CD4-positive, alpha-beta memory T cell (primary cell): ENCODE measurements at regions of chr19 and their contacts with region 1.

Region 1: GRCh38 chr19:1131738-1132551 is 28.2 kb downstream of the GPX4 start:
- DNase-seq: peak; percentile 82 to 92 (median 83)
- H3K4me3 ChIP-seq: peak overlapping the region; percentile 61 to 89
- H3K4me3 Mint-ChIP-seq: peak overlapping the region; percentile 85 to 92 (median 88)
- H3K27ac ChIP-seq: peak overlapping the region; percentile 90
- H3K27ac Mint-ChIP-seq: peak overlapping the region; percentile 91 to 94 (median 94)
- H3K4me1 ChIP-seq: peaks cover 60% of the 10 kb centered on the region
- H3K4me1 Mint-ChIP-seq: peaks cover 7 to 35% (median 23%) of the 10 kb centered on the region in 4 donors
- H3K27me3 ChIP-seq: no peaks in the 10 kb centered on the region
- H3K27me3 Mint-ChIP-seq: no peaks in the 10 kb centered on the region

Region 2: GRCh38 chr19:1087813-1088415 is 44.0 kb before region 1 on chr19:
- CTCF ChIA-PET with region 1: no interaction called
- POLR2A ChIA-PET with region 1: interaction called, 15 read pairs
- intact Hi-C with region 1: no loop called
- DNase-seq: peak; percentile 59 to 78 (median 65)
- H3K4me3 ChIP-seq: no peak overlapping the region
- H3K4me3 Mint-ChIP-seq: peak overlapping the region in 5 of 8 donors; percentile 25 to 82 (median 69)
- H3K27ac ChIP-seq: peak overlapping the region; percentile 74
- H3K27ac Mint-ChIP-seq: peak overlapping the region; percentile 72 to 97 (median 93)
- H3K4me1 ChIP-seq: peaks cover 64% of the 10 kb centered on the region
- H3K4me1 Mint-ChIP-seq: peaks cover 14 to 67% (median 32%) of the 10 kb centered on the region in 4 donors
- H3K27me3 ChIP-seq: no peaks in the 10 kb centered on the region
- H3K27me3 Mint-ChIP-seq: no peaks in the 10 kb centered on the region

Region 3: DNA sequence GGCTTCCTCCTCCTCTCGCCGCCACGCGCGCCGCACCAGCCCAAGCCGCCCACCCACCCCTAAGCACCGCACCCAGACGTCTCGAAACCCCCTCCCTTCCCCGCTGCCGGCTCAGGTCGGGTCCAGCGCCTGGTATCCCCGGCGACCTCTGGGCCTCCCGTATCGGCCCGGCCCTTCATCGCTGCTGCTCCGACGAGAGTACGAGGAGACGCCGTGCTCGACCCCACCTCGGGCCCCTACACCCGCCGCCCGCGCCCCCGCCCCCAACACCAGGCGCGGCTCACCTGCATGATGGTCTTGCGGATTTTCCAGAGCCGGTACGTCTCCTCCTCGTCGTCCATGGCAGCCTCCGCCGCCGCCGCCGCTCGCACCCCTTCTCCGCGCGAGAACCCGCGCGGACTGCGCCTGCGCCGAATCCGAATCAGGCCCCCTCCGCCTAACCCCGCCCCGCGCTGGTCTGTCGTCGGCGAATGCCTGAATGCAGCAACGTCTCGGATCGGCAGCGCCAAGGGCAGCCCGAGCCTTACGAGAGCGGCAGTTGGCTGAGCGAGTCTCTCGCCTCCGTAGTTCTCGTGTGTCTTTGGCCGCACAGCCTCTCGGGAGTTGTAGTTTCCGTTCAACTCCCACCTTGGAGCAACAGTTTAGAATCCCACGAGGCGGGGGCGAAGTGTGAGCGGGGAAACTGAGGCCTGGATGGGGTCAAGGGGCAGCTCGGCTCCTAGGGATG is 36.8 kb before region 1 on chr19 and contains the start of gene POLR2E:
- CTCF ChIA-PET with region 1: no interaction called
- POLR2A ChIA-PET with region 1: interaction called, 8 read pairs
- intact Hi-C with region 1: loop called (anchors 5 kb)
- DNase-seq: peak; percentile 97 to 99 (median 98)
- H3K4me3 ChIP-seq: peak within 1 kb of the TSS; percentile 54 to 65
- H3K4me3 Mint-ChIP-seq: peak within 1 kb of the TSS; percentile 83 to 96 (median 90)
- H3K27ac ChIP-seq: peak within 1 kb of the TSS; percentile 85
- H3K27ac Mint-ChIP-seq: peak within 1 kb of the TSS; percentile 87 to 97 (median 93)
- H3K4me1 ChIP-seq: peaks cover 44% of the 10 kb centered on the region
- H3K4me1 Mint-ChIP-seq: peaks cover 22 to 75% (median 46%) of the 10 kb centered on the region in 4 donors
- H3K27me3 ChIP-seq: no peaks in the 10 kb centered on the region
- H3K27me3 Mint-ChIP-seq: no peaks in the 10 kb centered on the region
- total RNA-seq, gene POLR2E: 76.0 to 80.0 TPM

Region 4: GRCh38 chr19:1103708-1104310 is 28.1 kb before region 1 on chr19 and contains the start of gene GPX4:
- CTCF ChIA-PET with region 1: no interaction called
- POLR2A ChIA-PET with region 1: interaction called, 42 read pairs
- intact Hi-C with region 1: loop called (anchors 5 kb)
- DNase-seq: peak; percentile 94 to 98 (median 97)
- H3K4me3 ChIP-seq: peak within 1 kb of the TSS; percentile 47 to 76
- H3K4me3 Mint-ChIP-seq: peak within 1 kb of the TSS; percentile 73 to 86 (median 77)
- H3K27ac ChIP-seq: peak within 1 kb of the TSS; percentile 96
- H3K27ac Mint-ChIP-seq: peak within 1 kb of the TSS; percentile 92 to 97 (median 96)
- H3K4me1 ChIP-seq: peaks cover 43% of the 10 kb centered on the region
- H3K4me1 Mint-ChIP-seq: peaks cover 14 to 51% (median 33%) of the 10 kb centered on the region in 4 donors
- H3K27me3 ChIP-seq: no peaks in the 10 kb centered on the region
- H3K27me3 Mint-ChIP-seq: no peaks in the 10 kb centered on the region
- total RNA-seq, gene GPX4: 210 to 220 TPM

Region 5: GRCh38 chr19:1113033-1113985 is 18.6 kb before region 1 on chr19:
- CTCF ChIA-PET with region 1: interaction called, 5 read pairs
- POLR2A ChIA-PET with region 1: interaction called, 8 read pairs
- intact Hi-C with region 1: loop called (anchors 1 kb)
- DNase-seq: peak; percentile 75 to 83 (median 77)
- H3K4me3 ChIP-seq: no peak overlapping the region
- H3K4me3 Mint-ChIP-seq: no peak overlapping the region
- H3K27ac ChIP-seq: peak overlapping the region; percentile 35
- H3K27ac Mint-ChIP-seq: peak overlapping the region in 4 of 7 donors; percentile 24 to 53 (median 42)
- H3K4me1 ChIP-seq: peaks cover 6% of the 10 kb centered on the region
- H3K4me1 Mint-ChIP-seq: no peaks in the 10 kb centered on the region
- H3K27me3 ChIP-seq: no peaks in the 10 kb centered on the region
- H3K27me3 Mint-ChIP-seq: no peaks in the 10 kb centered on the region

Region 6: DNA sequence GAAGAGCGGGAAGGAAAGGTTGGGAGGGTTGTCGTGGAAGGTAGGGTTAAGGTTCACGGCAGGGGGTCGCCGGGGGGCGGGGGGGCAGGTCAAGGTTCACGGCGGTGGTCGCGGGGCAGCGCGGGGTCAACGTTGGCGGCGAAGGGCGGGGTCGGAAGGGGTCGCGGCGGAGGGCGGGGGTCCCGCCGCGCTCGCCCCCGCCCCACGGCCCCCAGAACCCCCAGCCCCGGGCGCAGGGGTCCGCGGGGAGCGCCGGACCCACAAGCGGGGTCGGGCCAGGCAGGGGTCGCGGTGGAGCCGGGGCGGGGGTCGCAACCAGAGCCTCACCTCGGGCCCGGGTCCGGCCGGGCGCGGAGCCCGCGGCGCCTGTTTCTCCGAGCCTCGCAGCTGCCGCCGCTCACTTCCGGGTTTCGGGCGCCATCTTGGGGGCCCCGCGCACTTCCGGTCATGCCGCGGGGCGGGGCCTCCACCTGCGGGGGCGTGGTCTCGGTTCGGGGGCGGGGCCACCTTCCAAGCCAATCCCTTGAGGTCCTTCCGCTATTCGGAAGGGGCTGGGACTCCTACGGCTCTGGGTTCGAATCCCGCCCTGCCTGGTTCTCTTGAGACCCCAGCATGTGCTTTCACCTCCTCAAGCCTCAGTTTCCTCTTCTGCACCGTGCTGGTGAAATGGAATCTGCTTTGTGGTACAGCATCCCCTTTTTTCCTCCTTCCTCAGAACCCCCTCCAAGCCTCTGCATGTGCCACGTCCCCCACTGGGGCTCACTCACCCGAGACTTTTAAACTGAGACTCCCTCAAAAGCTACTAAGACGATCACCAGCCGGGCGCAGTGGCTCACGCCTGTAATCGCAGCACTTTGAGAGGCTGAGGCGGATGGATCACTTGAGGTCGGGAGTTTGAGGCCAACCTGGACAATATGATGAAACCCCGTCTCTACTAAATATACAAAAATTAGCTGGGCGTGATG is 42.2 kb after region 1 on chr19 and contains the start of gene SBNO2:
- CTCF ChIA-PET with region 1: interaction called, 3 read pairs
- POLR2A ChIA-PET with region 1: interaction called, 26 read pairs
- intact Hi-C with region 1: loop called (anchors 2 kb)
- DNase-seq: peak; percentile 81 to 90 (median 87)
- H3K4me3 ChIP-seq: peak within 1 kb of the TSS; percentile 42 to 73
- H3K4me3 Mint-ChIP-seq: peak within 1 kb of the TSS; percentile 89 to 93 (median 90)
- H3K27ac ChIP-seq: peak within 1 kb of the TSS; percentile 65
- H3K27ac Mint-ChIP-seq: peak within 1 kb of the TSS; percentile 87 to 97 (median 94)
- H3K4me1 ChIP-seq: peaks cover 42% of the 10 kb centered on the region
- H3K4me1 Mint-ChIP-seq: peaks cover 16 to 37% (median 27%) of the 10 kb centered on the region in 4 donors
- H3K27me3 ChIP-seq: no peaks in the 10 kb centered on the region
- H3K27me3 Mint-ChIP-seq: no peaks in the 10 kb centered on the region
- total RNA-seq, gene SBNO2: 92.6 to 98.6 TPM

Region 7: GRCh38 chr19:1232652-1233072 is 100.7 kb after region 1 on chr19:
- CTCF ChIA-PET with region 1: no interaction called
- POLR2A ChIA-PET with region 1: no interaction called
- intact Hi-C with region 1: no loop called
- DNase-seq: no peak
- H3K4me3 ChIP-seq: no peak overlapping the region
- H3K4me3 Mint-ChIP-seq: no peak overlapping the region
- H3K27ac ChIP-seq: no peak overlapping the region
- H3K27ac Mint-ChIP-seq: peak overlapping the region in 3 of 7 donors; percentile 13 to 44 (median 23)
- H3K4me1 ChIP-seq: no peaks in the 10 kb centered on the region
- H3K4me1 Mint-ChIP-seq: peaks cover 0 to 4% (median 0%) of the 10 kb centered on the region in 4 donors
- H3K27me3 ChIP-seq: no peaks in the 10 kb centered on the region
- H3K27me3 Mint-ChIP-seq: no peaks in the 10 kb centered on the region